ENCODE measurements at regions of chr11 and their contacts with region 1.

Region 1: GRCh38 chr11:117090111-117090706 is 8.0 kb downstream of the SIK3 start:
- DNase-seq: no peak
- ATAC-seq: no peak
- H3K4me3 ChIP-seq: no peak overlapping the region
- H3K4me3 Mint-ChIP-seq: no peak overlapping the region
- H3K27ac ChIP-seq: no peak overlapping the region
- H3K27ac Mint-ChIP-seq: no peak overlapping the region
- H3K4me1 ChIP-seq: peaks cover 13 to 37% of the 10 kb centered on the region in 2 experiments
- H3K4me1 Mint-ChIP-seq: peaks cover 77 to 84% (median 79%) of the 10 kb centered on the region in 3 donors
- H3K27me3 ChIP-seq: no peaks in the 10 kb centered on the region
- H3K27me3 Mint-ChIP-seq: no peaks in the 10 kb centered on the region

Region 2: DNA sequence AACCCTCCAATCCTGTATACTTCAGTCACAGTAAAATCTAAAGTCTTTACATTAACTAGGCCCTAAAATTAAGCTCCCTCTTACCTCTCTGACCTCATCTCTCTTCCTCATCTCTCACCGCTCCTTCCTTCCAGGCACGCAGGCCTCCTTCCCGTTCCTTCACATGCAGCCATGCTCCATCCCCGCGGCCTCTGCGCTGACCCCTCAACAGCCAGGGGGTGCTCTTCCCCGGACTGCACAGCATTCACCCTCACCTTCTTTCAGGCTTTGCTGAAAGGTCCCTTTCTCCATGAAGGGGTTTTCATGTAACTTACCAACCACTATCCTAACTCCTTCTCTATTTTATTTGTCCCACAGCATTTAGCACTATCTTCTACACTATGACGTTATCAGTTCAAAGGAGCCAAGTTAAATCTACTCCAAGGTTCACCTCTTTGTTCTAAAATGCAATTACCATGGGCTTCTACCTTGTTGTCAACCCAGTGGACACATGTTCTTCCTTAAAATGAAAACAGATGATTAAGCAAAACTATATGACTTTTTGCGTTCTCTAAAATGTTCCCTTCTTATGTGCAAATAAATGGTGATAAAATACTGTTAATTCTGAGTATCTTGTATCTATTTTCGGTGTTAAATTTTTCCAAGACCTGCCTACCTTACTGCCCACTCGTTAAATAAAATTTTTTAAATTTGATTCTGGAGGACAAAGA is 195.0 kb before region 1 on chr11:
- CTCF ChIA-PET with region 1: no interaction called
- POLR2A ChIA-PET with region 1: interaction called in 1 of 2 experiments, 11 read pairs
- DNase-seq: peak in 10 of 35 experiments; percentile 1 to 46 (median 9)
- ATAC-seq: peak in 3 of 4 experiments; percentile 33 to 63 (median 56)
- H3K4me3 ChIP-seq: no peak overlapping the region
- H3K4me3 Mint-ChIP-seq: no peak overlapping the region
- H3K27ac ChIP-seq: no peak overlapping the region
- H3K27ac Mint-ChIP-seq: peak overlapping the region; percentile 21 to 71
- H3K4me1 ChIP-seq: peaks cover 0 to 4% of the 10 kb centered on the region in 2 experiments
- H3K4me1 Mint-ChIP-seq: peaks cover 10 to 27% (median 20%) of the 10 kb centered on the region in 3 donors
- H3K27me3 ChIP-seq: no peaks in the 10 kb centered on the region
- H3K27me3 Mint-ChIP-seq: no peaks in the 10 kb centered on the region

Region 3: DNA sequence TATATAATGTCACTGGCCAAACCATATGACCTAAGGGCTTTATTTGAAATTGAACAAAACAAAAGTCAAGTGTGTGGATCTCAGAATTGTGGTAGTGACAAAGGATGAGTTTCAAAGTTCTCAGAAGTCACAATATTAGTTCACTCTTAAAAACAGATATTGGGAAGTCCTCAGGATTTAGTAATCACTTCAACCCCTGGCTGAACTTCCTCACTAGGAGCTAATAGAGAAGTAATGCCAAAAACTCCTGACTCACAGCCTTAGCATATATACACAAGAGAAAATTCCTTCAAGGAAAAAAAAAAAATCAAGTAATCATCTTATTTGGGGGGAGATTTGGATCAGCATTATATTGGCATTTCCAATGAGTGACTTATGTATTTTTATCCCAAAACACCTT is 177.2 kb before region 1 on chr11:
- CTCF ChIA-PET with region 1: no interaction called
- POLR2A ChIA-PET with region 1: interaction called, 4 to 10 read pairs
- DNase-seq: no peak
- ATAC-seq: no peak
- H3K4me3 ChIP-seq: no peak overlapping the region
- H3K4me3 Mint-ChIP-seq: no peak overlapping the region
- H3K27ac ChIP-seq: no peak overlapping the region
- H3K27ac Mint-ChIP-seq: peak overlapping the region in 1 of 2 donors; percentile 7
- H3K4me1 ChIP-seq: peaks cover 0 to 3% of the 10 kb centered on the region in 2 experiments
- H3K4me1 Mint-ChIP-seq: peaks cover 23 to 26% (median 26%) of the 10 kb centered on the region in 3 donors
- H3K27me3 ChIP-seq: no peaks in the 10 kb centered on the region
- H3K27me3 Mint-ChIP-seq: no peaks in the 10 kb centered on the region

Region 4: GRCh38 chr11:117005758-117006157 is 84.5 kb before region 1 on chr11:
- CTCF ChIA-PET with region 1: no interaction called
- POLR2A ChIA-PET with region 1: no interaction called
- DNase-seq: no peak
- ATAC-seq: no peak
- H3K4me3 ChIP-seq: no peak overlapping the region
- H3K4me3 Mint-ChIP-seq: no peak overlapping the region
- H3K27ac ChIP-seq: no peak overlapping the region
- H3K27ac Mint-ChIP-seq: peak overlapping the region in 1 of 2 donors; percentile 7
- H3K4me1 ChIP-seq: peaks cover 2 to 6% of the 10 kb centered on the region in 2 experiments
- H3K4me1 Mint-ChIP-seq: peaks cover 67 to 77% (median 69%) of the 10 kb centered on the region in 3 donors
- H3K27me3 ChIP-seq: no peaks in the 10 kb centered on the region
- H3K27me3 Mint-ChIP-seq: no peaks in the 10 kb centered on the region

Region 5: GRCh38 chr11:117045196-117045595 is 45.0 kb before region 1 on chr11:
- CTCF ChIA-PET with region 1: no interaction called
- POLR2A ChIA-PET with region 1: interaction called in 1 of 2 experiments, 13 read pairs
- DNase-seq: no peak
- ATAC-seq: no peak
- H3K4me3 ChIP-seq: no peak overlapping the region
- H3K4me3 Mint-ChIP-seq: no peak overlapping the region
- H3K27ac ChIP-seq: no peak overlapping the region
- H3K27ac Mint-ChIP-seq: peak overlapping the region in 1 of 2 donors; percentile 1
- H3K4me1 ChIP-seq: peaks cover 0 to 5% of the 10 kb centered on the region in 2 experiments
- H3K4me1 Mint-ChIP-seq: peaks cover 63 to 74% (median 69%) of the 10 kb centered on the region in 3 donors
- H3K27me3 ChIP-seq: no peaks in the 10 kb centered on the region
- H3K27me3 Mint-ChIP-seq: no peaks in the 10 kb centered on the region

Measured in T-cell (primary cell).